PC-9 (cell line): ENCODE measurements at regions of chr2 and their contacts with region 1.

Region 1: GRCh38 chr2:11257078-11257477 is 87.4 kb downstream of the ROCK2 start:
- DNase-seq: no peak
- H3K4me3 ChIP-seq: no peak overlapping the region
- H3K27ac ChIP-seq: no peak overlapping the region
- H3K4me1 ChIP-seq: peaks cover 15% of the 10 kb centered on the region
- H3K27me3 ChIP-seq: no peaks in the 10 kb centered on the region
- CTCF ChIP-seq: no peak

Region 2: DNA sequence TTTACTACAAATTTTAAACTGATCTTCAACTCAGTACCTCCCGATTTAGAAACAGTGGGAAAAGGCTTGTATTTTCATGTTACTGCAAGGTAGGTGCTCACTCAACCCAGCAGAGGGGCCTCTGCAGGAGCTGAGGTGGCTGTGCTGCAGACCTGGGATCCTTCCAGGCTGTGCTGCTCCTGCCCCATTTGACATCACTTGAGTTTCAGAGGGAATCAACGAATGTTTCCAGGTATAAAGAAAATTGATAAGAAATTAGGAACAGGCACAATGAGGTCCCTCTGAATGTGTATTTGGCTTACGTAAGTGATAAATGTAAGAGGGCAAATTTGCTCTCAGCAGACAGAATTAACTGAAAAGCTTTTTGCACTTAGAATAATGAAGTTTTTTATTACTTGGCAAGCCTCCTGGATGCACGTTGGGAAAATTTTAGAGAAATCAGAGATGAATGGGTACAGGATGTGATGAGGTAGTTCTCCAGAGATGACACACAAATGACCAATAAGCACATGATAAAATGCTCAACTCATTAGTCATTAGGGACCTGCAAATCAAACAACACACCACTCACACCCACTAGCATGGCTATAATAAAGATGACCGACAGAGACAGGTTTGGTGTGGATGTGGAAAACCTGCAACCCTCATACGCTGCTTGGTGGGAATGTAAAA is 681.3 kb before region 1 on chr2:
- CTCF ChIA-PET with region 1: no interaction called
- POLR2A ChIA-PET with region 1: no interaction called
- intact Hi-C with region 1: no loop called
- DNase-seq: peak in 1 of 2 experiments; percentile 86
- H3K4me3 ChIP-seq: no peak overlapping the region
- H3K27ac ChIP-seq: peak overlapping the region; percentile 40
- H3K4me1 ChIP-seq: peaks cover 22% of the 10 kb centered on the region
- H3K27me3 ChIP-seq: no peaks in the 10 kb centered on the region
- CTCF ChIP-seq: no peak

Region 3: DNA sequence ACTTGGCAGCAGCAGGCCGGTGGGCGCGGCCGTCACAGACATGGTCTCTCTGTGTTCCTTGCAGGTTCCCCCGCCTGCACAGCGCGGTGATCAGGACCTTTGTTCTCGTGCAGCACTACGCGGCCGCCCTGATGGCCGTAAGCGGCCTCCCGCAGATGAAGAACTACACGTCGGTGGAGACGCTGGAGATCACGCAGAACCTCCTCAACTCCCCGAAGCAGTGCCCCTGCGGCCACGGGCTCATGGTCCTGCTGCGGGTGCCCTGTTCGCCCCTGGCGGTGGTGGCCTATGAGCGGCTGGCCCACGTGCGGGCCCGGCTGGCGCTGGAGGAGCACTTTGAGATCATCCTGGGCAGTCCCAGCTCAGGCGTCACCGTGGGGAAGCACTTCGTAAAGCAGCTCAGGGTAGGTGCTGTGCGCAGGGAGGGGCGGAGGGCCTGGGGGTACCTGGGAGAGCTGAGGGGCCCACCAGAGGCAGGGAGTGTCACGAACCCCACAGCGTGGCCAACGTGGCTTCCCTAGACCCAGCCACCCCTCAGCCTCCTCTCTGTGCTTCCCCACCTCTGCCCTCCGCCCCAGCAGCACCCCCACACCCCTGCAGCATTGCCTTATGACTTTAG is 353.7 kb after region 1 on chr2:
- CTCF ChIA-PET with region 1: interaction called, 14 read pairs
- POLR2A ChIA-PET with region 1: no interaction called
- intact Hi-C with region 1: no loop called
- DNase-seq: no peak
- H3K4me3 ChIP-seq: no peak overlapping the region
- H3K27ac ChIP-seq: no peak overlapping the region
- H3K4me1 ChIP-seq: 0 out of 2 replicates have a peak, but pooled peaks cover 3% of the 10 kb centered on the region
- H3K27me3 ChIP-seq: 0 out of 2 replicates have a peak, but pooled peaks cover 8% of the 10 kb centered on the region
- CTCF ChIP-seq: no peak